ENCODE measurements at regions of chrX and their contacts with region 1.

Region 1: GRCh38 chrX:55057675-55058249 is 17.1 kb upstream of the PAGE2B start:
- DNase-seq: peak in 9 of 14 experiments; percentile 9 to 69 (median 25)
- ATAC-seq: peak; percentile 59
- H3K4me3 ChIP-seq: peak overlapping the region; percentile 30
- H3K4me3 Mint-ChIP-seq: peak overlapping the region; percentile 84
- H3K27ac ChIP-seq: no peak overlapping the region
- H3K27ac Mint-ChIP-seq: peak overlapping the region; percentile 88
- H3K4me1 ChIP-seq: peaks cover 11% of the 10 kb centered on the region
- H3K4me1 Mint-ChIP-seq: peaks cover 24% of the 10 kb centered on the region
- H3K27me3 ChIP-seq: no peaks in the 10 kb centered on the region
- H3K27me3 Mint-ChIP-seq: no peaks in the 10 kb centered on the region
- CTCF ChIP-seq: peak; percentile 82

Region 2: GRCh38 chrX:53683556-53684414 is 1374.0 kb before region 1 on chrX:
- CTCF ChIA-PET with region 1: no interaction called
- POLR2A ChIA-PET with region 1: no interaction called
- intact Hi-C with region 1: loop called in 1 of 2 experiments (anchors 10 kb)
- DNase-seq: peak; percentile 77 to 98 (median 86)
- ATAC-seq: peak; percentile 78
- H3K4me3 ChIP-seq: peak overlapping the region; percentile 90
- H3K4me3 Mint-ChIP-seq: peak overlapping the region; percentile 95
- H3K27ac ChIP-seq: peak overlapping the region; percentile 75 to 98
- H3K27ac Mint-ChIP-seq: peak overlapping the region; percentile 99
- H3K4me1 ChIP-seq: peaks cover 18% of the 10 kb centered on the region
- H3K4me1 Mint-ChIP-seq: peaks cover 63% of the 10 kb centered on the region
- H3K27me3 ChIP-seq: no peaks in the 10 kb centered on the region
- H3K27me3 Mint-ChIP-seq: no peaks in the 10 kb centered on the region
- CTCF ChIP-seq: no peak

Region 3: DNA sequence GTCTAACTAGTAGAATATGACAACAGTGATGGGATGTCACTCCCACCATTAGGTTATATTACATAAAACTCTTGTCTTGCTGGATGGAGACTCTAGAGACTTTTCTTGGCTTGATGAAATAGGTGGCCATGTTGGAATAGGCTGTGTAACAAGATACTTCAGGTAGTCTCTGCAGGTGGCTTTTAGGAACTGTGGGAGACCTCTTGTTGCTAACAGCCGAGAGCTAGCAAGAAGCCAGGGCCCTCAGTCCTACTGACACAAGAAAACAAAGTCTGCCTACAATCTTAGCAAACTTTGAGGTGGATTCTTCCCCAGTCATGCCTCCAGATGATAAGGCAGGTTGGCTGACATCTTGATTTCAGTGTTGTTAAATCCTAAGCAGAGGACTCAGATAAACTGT is 455.2 kb before region 1 on chrX:
- CTCF ChIA-PET with region 1: no interaction called
- POLR2A ChIA-PET with region 1: no interaction called
- intact Hi-C with region 1: no loop called
- DNase-seq: no peak
- ATAC-seq: no peak
- H3K4me3 ChIP-seq: no peak overlapping the region
- H3K4me3 Mint-ChIP-seq: no peak overlapping the region
- H3K27ac ChIP-seq: no peak overlapping the region
- H3K27ac Mint-ChIP-seq: no peak overlapping the region
- H3K4me1 ChIP-seq: no peaks in the 10 kb centered on the region
- H3K4me1 Mint-ChIP-seq: no peaks in the 10 kb centered on the region
- H3K27me3 ChIP-seq: no peaks in the 10 kb centered on the region
- H3K27me3 Mint-ChIP-seq: no peaks in the 10 kb centered on the region
- CTCF ChIP-seq: no peak

Region 4: DNA sequence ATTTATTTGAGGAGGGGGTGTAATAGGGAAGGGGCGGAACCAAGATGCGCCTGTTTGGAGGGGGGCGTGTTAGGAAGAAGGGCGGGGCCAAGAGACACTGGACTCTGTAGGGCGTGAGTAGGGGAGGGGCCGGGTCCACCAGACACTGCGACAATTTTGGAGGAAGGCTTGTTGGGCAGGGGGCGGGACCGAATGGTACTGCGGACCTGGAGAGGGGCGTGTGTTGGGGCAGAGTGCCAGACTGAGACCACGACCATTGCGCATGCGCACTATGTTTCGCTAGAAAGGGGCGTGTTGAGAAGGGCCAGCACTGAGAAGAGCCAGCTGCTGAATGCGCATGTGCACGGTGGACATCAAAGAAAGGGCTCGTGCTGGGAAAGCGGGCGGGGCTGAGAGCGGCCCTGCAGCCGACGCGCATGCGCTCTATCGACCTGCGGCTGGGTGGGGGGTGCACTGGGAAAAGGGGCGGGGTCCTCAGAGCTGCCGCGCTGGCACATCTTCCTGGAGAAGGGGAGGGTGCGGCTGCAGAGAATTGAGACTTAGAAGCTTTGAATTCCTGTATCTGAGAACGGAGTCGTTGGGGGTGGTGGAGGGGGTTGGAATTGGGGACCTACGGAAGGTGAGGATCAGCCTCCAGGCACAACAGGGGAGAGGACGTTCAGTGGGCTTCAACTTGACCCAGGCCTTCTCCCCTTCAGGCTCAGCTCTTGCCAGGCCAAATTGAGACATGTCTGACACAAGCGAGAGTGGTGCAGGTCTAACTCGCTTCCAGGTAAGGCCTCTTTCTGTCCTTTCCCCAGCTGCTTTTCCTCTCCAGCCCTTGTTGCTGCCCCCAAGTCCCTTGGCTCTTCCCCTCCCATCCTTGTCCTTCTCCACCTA is 248.9 kb before region 1 on chrX:
- CTCF ChIA-PET with region 1: no interaction called
- POLR2A ChIA-PET with region 1: no interaction called
- intact Hi-C with region 1: loop called in 1 of 2 experiments (anchors 10 kb)
- DNase-seq: peak; percentile 75 to 97 (median 84)
- ATAC-seq: peak; percentile 70
- H3K4me3 ChIP-seq: peak overlapping the region; percentile 93
- H3K4me3 Mint-ChIP-seq: peak overlapping the region; percentile 95
- H3K27ac ChIP-seq: peak overlapping the region; percentile 65 to 88
- H3K27ac Mint-ChIP-seq: peak overlapping the region; percentile 98
- H3K4me1 ChIP-seq: peaks cover 25% of the 10 kb centered on the region
- H3K4me1 Mint-ChIP-seq: peaks cover 24% of the 10 kb centered on the region
- H3K27me3 ChIP-seq: no peaks in the 10 kb centered on the region
- H3K27me3 Mint-ChIP-seq: no peaks in the 10 kb centered on the region
- CTCF ChIP-seq: no peak

Region 5: DNA sequence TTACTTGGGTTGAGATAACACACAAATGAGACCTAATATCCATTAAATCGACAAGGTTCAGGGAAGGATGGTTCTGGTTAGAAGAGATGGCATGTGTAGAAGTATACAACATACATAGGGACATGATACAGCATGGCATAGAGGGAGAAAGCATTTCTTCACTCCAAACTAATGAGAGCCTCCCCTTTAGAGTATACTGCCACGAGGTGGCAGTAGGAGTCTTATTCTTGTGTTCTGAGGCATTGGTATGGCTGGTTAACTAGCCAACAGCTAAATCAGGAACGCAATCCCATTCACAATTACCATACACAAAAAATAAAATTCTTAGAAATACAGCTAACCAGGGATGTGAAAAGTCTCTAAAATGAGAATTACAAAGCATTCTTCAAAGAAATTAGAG is 166.2 kb before region 1 on chrX:
- CTCF ChIA-PET with region 1: interaction called, 7 read pairs
- POLR2A ChIA-PET with region 1: interaction called, 6 read pairs
- intact Hi-C with region 1: loop called (anchors 1 kb)
- DNase-seq: peak in 11 of 14 experiments; percentile 6 to 68 (median 31)
- ATAC-seq: peak; percentile 84
- H3K4me3 ChIP-seq: no peak overlapping the region
- H3K4me3 Mint-ChIP-seq: no peak overlapping the region
- H3K27ac ChIP-seq: no peak overlapping the region
- H3K27ac Mint-ChIP-seq: no peak overlapping the region
- H3K4me1 ChIP-seq: no peaks in the 10 kb centered on the region
- H3K4me1 Mint-ChIP-seq: peaks cover 4% of the 10 kb centered on the region
- H3K27me3 ChIP-seq: peaks cover 0 to 3% of the 10 kb centered on the region in 2 experiments
- H3K27me3 Mint-ChIP-seq: no peaks in the 10 kb centered on the region
- CTCF ChIP-seq: peak; percentile 57

Region 6: GRCh38 chrX:55008471-55009358 is 49.0 kb before region 1 on chrX:
- CTCF ChIA-PET with region 1: interaction called, 3 read pairs
- POLR2A ChIA-PET with region 1: no interaction called
- intact Hi-C with region 1: loop called (anchors 5 kb)
- DNase-seq: peak in 4 of 14 experiments; percentile 3 to 19 (median 11)
- ATAC-seq: peak; percentile 58
- H3K4me3 ChIP-seq: no peak overlapping the region
- H3K4me3 Mint-ChIP-seq: no peak overlapping the region
- H3K27ac ChIP-seq: no peak overlapping the region
- H3K27ac Mint-ChIP-seq: peak overlapping the region; percentile 50
- H3K4me1 ChIP-seq: peaks cover 7% of the 10 kb centered on the region
- H3K4me1 Mint-ChIP-seq: peaks cover 30% of the 10 kb centered on the region
- H3K27me3 ChIP-seq: no peaks in the 10 kb centered on the region
- H3K27me3 Mint-ChIP-seq: no peaks in the 10 kb centered on the region
- CTCF ChIP-seq: no peak